OCI-LY7 (cell line): ENCODE measurements at regions of chr2 and their contacts with region 1.

Region 1: GRCh38 chr2:160387558-160388262 is 105.9 kb downstream of the RBMS1 start:
- DNase-seq: no peak
- H3K4me3 ChIP-seq: no peak overlapping the region
- H3K27ac ChIP-seq: no peak overlapping the region
- H3K4me1 ChIP-seq: peaks cover 10% of the 10 kb centered on the region
- CTCF ChIP-seq: no peak

Region 2: DNA sequence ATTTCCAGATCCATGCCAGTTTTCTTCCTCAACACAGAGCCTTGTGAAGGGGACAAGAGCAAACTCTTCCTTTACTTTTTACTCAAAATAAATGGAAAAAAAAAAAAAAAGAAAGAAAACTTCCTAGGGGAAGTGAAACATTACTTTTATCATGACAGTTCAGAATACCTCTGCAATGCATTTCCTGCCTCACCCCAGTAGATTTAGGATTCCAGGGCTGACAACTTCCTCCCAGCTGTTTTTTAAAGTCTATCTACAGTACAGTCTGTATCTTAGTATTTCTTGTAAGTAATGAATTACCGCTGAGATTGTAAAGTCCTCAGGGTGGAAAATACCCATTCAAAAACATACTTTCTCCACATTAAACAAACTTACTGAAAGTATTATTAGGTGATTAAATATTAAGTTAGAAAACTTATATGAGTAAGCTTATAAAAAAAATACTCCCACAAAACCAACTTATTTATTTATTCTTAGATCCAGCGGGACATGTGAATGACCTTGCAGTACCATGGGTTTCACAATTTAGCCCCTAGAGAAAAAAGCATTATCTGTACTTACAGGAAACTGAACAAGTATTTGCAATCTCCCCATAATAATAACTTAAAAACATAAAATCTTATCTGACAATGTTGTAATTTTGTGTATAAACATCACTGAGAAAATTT is 11.8 kb before region 1 on chr2:
- CTCF ChIA-PET with region 1: no interaction called
- POLR2A ChIA-PET with region 1: interaction called, 42 read pairs
- intact Hi-C with region 1: no loop called
- DNase-seq: peak; percentile 64
- H3K4me3 ChIP-seq: peak overlapping the region; percentile 2
- H3K27ac ChIP-seq: peak overlapping the region; percentile 29
- H3K4me1 ChIP-seq: peaks cover 27% of the 10 kb centered on the region
- CTCF ChIP-seq: no peak

Region 3: GRCh38 chr2:160429248-160430000 is 41.7 kb after region 1 on chr2:
- CTCF ChIA-PET with region 1: no interaction called
- POLR2A ChIA-PET with region 1: interaction called, 14 read pairs
- intact Hi-C with region 1: no loop called
- DNase-seq: peak; percentile 79
- H3K4me3 ChIP-seq: no peak overlapping the region
- H3K27ac ChIP-seq: peak overlapping the region; percentile 63
- H3K4me1 ChIP-seq: peaks cover 34% of the 10 kb centered on the region
- CTCF ChIP-seq: peak; percentile 92